PC-3 (cell line): ENCODE measurements at regions of chr20 and their contacts with region 1.

Region 1: GRCh38 chr20:62237801-62238571 is at the start of gene OSBPL2:
- DNase-seq: peak; percentile 99
- ATAC-seq: peak; percentile 96
- H3K4me3 ChIP-seq: peak within 1 kb of the TSS; percentile 89
- H3K27ac ChIP-seq: 0 out of 2 replicates have a peak within 1 kb of the TSS, but pooled peaks have one; percentile 13
- H3K4me1 ChIP-seq: peaks cover 29% of the 10 kb centered on the region
- H3K27me3 ChIP-seq: no peaks in the 10 kb centered on the region
- CTCF ChIP-seq: no peak
- total RNA-seq, gene OSBPL2: 32.5 and 39.7 TPM in 2 replicates

Region 2: GRCh38 chr20:62182613-62183425 is 55.2 kb before region 1 on chr20 and contains the start of gene MTG2:
- CTCF ChIA-PET with region 1: no interaction called
- POLR2A ChIA-PET with region 1: no interaction called
- intact Hi-C with region 1: loop called (anchors 2 kb)
- DNase-seq: peak; percentile 98
- ATAC-seq: peak; percentile 98
- H3K4me3 ChIP-seq: peak within 1 kb of the TSS; percentile 98
- H3K27ac ChIP-seq: peak within 1 kb of the TSS; percentile 70
- H3K4me1 ChIP-seq: peaks cover 11% of the 10 kb centered on the region
- H3K27me3 ChIP-seq: no peaks in the 10 kb centered on the region
- CTCF ChIP-seq: no peak
- total RNA-seq, gene MTG2: 33.9 and 40.5 TPM in 2 replicates